ENCODE measurements at regions of chr12 and their contacts with region 1.

Region 1: GRCh38 chr12:131454418-131455217 is 256.3 kb upstream of the SFSWAP start:
- DNase-seq: peak; percentile 63 to 72
- H3K4me3 ChIP-seq: no peak overlapping the region
- H3K27ac ChIP-seq: no peak overlapping the region
- H3K4me1 ChIP-seq: no peaks in the 10 kb centered on the region
- H3K27me3 ChIP-seq: no peaks in the 10 kb centered on the region
- CTCF ChIP-seq: peak; percentile 81 to 91 (median 91)
- EP300 ChIP-seq: peak in 1 of 2 experiments; percentile 38; a peak in 1 of 3 replicates
- POLR2A ChIP-seq: no peak
- RAD21 ChIP-seq: peak; percentile 75 to 83

Region 2: GRCh38 chr12:131345521-131346436 is 108.8 kb before region 1 on chr12:
- CTCF ChIA-PET with region 1: no interaction called
- POLR2A ChIA-PET with region 1: no interaction called
- DNase-seq: peak in 1 of 2 experiments; percentile 27
- H3K4me3 ChIP-seq: no peak overlapping the region
- H3K27ac ChIP-seq: no peak overlapping the region
- H3K4me1 ChIP-seq: peaks cover 2 to 17% (median 14%) of the 10 kb centered on the region in 4 experiments; a peak in 6 of 7 replicates
- H3K27me3 ChIP-seq: no peaks in the 10 kb centered on the region; a peak in 1 of 7 replicates
- CTCF ChIP-seq: no peak
- EP300 ChIP-seq: no peak
- POLR2A ChIP-seq: no peak
- RAD21 ChIP-seq: no peak

Region 3: DNA sequence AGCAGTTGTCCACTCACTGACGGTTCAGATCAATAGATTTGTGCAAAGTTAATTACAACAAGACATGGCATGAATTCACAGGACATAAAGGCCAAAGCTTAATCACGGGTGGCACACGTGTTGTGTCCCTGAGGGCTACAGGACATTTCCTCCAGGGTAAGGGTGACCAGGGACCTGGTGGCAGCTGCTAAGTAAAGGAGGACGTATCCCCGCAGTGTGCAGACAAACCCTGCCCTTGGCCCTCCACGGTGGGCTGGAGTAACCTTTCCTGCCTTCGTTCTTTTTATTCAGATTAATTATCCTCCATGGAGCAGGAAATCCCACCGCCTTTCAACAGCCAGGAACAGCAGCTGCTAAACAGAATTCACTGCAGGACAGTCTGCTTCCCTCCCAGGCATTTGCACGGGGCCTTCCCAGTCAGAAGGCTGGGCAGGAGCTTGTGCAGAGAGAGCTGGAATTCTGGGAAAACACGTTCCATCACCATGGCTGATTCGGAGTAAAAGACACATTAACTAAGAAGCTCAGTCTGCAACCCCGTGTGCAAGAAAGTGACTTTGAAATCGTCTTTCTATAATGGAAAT is 33.7 kb before region 1 on chr12:
- CTCF ChIA-PET with region 1: interaction called, 11 read pairs
- POLR2A ChIA-PET with region 1: no interaction called
- DNase-seq: no peak
- H3K4me3 ChIP-seq: no peak overlapping the region
- H3K27ac ChIP-seq: no peak overlapping the region
- H3K4me1 ChIP-seq: peaks cover 0 to 2% (median 0%) of the 10 kb centered on the region in 4 experiments; a peak in 1 of 7 replicates
- H3K27me3 ChIP-seq: no peaks in the 10 kb centered on the region
- CTCF ChIP-seq: no peak
- EP300 ChIP-seq: no peak
- POLR2A ChIP-seq: no peak
- RAD21 ChIP-seq: no peak

Region 4: DNA sequence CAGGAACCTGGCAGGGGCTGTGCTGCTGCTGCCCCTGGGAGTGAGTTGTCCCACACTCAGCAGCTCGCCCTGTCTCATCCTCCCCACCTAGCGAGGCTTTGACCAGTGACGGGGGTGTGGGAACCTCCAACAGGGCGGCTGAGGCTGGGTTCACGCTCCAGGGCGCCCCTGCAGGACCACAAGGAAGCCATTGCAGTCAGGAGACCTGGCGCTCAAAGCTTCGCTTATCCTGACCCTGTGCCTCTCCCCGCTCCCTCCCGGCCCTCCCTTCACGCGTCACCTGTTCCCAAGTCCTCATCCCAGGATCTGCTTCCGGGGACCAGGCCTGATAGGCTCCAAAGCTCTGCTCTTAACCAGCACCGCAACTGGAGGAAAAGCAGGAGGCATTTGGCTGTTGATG is 15.7 kb before region 1 on chr12:
- CTCF ChIA-PET with region 1: interaction called, 26 read pairs
- POLR2A ChIA-PET with region 1: no interaction called
- DNase-seq: no peak
- H3K4me3 ChIP-seq: no peak overlapping the region
- H3K27ac ChIP-seq: no peak overlapping the region
- H3K4me1 ChIP-seq: peaks cover 0 to 7% (median 2%) of the 10 kb centered on the region in 4 experiments; a peak in 3 of 7 replicates
- H3K27me3 ChIP-seq: no peaks in the 10 kb centered on the region
- CTCF ChIP-seq: peak in 2 of 3 experiments; percentile 38 to 44; a peak in 3 of 4 replicates
- EP300 ChIP-seq: no peak
- POLR2A ChIP-seq: no peak
- RAD21 ChIP-seq: peak; percentile 28 to 34; a peak in 3 of 4 replicates

Region 5: DNA sequence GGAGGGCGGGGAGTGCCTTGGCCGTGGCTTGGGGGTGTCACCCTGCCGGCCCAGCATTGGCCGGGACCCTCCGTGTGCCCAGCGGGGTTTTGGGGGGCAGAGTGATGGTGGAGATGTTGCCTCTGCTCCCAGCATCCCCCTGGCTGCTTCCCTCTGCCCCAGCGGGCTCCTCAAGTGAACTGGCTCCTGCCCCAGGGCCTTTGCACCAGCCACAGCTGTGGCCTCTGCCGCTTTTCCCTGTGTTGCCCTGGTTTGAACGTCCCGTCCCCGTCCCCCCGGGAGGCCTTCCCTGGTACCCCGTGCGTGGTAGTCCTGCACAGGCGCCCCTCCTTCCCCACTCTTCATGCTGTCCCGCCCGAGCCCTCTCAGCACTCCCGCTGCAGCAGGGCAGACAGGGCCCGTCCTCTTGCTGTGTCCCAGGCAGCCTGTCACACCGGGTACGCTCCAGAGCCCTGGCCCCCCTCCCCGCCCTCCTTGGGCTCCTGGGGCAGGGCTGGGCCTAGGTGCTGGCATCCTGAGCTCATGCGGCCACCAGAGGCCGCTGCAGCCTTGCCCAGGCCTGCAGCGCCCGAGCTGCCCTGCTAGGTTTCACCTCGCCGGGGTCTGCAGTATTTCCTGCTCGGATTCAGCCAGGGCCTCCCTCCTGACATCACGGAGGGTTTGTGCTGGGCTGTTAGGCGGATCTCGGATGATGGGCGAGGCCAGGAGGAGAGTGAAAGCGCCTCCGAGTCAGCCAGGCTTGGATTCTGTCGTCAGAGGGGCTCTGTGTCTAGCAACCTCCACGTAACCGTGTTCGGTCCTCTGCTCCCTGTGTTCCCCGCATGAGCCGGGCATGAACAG is 699.1 kb after region 1 on chr12:
- CTCF ChIA-PET with region 1: no interaction called
- POLR2A ChIA-PET with region 1: no interaction called
- DNase-seq: peak; percentile 77 to 85
- H3K4me3 ChIP-seq: no peak overlapping the region
- H3K27ac ChIP-seq: no peak overlapping the region
- H3K4me1 ChIP-seq: peaks cover 0 to 3% (median 1%) of the 10 kb centered on the region in 4 experiments; a peak in 4 of 7 replicates
- H3K27me3 ChIP-seq: no peaks in the 10 kb centered on the region; a peak in 2 of 7 replicates
- CTCF ChIP-seq: peak in 2 of 3 experiments; percentile 96 to 98; a peak in 3 of 4 replicates
- EP300 ChIP-seq: no peak
- POLR2A ChIP-seq: no peak
- RAD21 ChIP-seq: peak; percentile 96 to 100